K562 (cell line): ENCODE measurements at regions of chr1 and their contacts with region 1.

Region 1: GRCh38 chr1:16146279-16147155 is 9.4 kb downstream of the EPHA2 start:
- DNase-seq: peak; percentile 98
- ATAC-seq: peak; percentile 78
- H3K4me3 ChIP-seq: peak overlapping the region; percentile 23
- H3K27ac ChIP-seq: peak overlapping the region; percentile 93
- H3K4me1 ChIP-seq: peaks cover 62 to 73% of the 10 kb centered on the region in 2 experiments
- H3K27me3 ChIP-seq: no peaks in the 10 kb centered on the region
- CTCF ChIP-seq: no peak
- EP300 ChIP-seq: peak; percentile 96
- POLR2A ChIP-seq: peak; percentile 80
- RAD21 ChIP-seq: 0 out of 4 replicates have a peak, but pooled peaks of 1 of the 2 experiments have one; percentile 1

Region 2: GRCh38 chr1:14194511-14194910 is 1952.0 kb before region 1 on chr1:
- CTCF ChIA-PET with region 1: no interaction called
- POLR2A ChIA-PET with region 1: no interaction called
- in situ Hi-C with region 1: no loop called
- intact Hi-C with region 1: no loop called
- DNase-seq: no peak
- ATAC-seq: no peak
- H3K4me3 ChIP-seq: no peak overlapping the region
- H3K27ac ChIP-seq: no peak overlapping the region
- H3K4me1 ChIP-seq: no peaks in the 10 kb centered on the region
- H3K27me3 ChIP-seq: peaks cover 0 to 2% of the 10 kb centered on the region in 2 experiments; a peak in 2 of 5 replicates
- CTCF ChIP-seq: no peak
- EP300 ChIP-seq: no peak
- POLR2A ChIP-seq: no peak
- RAD21 ChIP-seq: no peak

Region 3: DNA sequence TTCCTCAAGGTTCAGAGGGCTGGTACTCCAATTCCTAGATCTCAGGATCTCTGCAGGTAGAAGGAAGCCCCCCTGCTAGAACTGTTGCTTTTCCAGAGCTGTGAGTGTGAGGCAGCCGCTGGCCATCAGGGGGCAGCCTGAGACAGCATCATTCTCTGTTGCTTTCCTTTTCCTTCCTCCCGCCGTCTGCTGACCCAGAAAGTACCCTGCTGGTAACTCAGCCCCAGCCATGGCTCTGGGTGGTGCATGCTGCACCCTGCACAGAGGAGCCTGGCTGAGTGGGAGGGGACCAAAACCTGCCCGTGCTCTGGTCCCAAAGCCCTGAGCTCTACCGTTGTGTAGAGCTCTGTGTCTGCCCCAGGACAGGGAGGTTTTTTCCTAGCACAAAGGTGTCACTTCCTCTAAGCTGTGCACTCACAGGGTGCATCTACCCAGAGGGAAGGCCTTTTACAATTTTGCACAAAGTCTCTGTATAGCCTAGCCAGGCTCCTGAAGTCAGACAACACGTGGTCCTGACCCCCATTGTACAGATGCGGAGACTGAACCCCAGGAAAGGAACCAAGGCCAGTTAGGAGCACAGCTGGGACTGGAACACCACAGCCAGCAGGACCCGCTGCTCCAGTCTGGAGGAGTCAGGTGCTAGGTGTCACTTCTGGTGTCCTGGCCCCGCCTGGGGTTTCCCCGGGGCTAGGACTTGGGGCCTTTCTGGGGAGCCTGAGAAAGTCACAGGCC is 67.4 kb before region 1 on chr1:
- CTCF ChIA-PET with region 1: interaction called, 3 read pairs
- POLR2A ChIA-PET with region 1: no interaction called
- in situ Hi-C with region 1: no loop called
- intact Hi-C with region 1: loop called (anchors 5 kb)
- DNase-seq: peak; percentile 71 to 87 (median 76)
- ATAC-seq: peak; percentile 84
- H3K4me3 ChIP-seq: no peak overlapping the region
- H3K27ac ChIP-seq: no peak overlapping the region
- H3K4me1 ChIP-seq: peaks cover 14 to 27% of the 10 kb centered on the region in 2 experiments; a peak in 4 of 5 replicates
- H3K27me3 ChIP-seq: peaks cover 0 to 3% of the 10 kb centered on the region in 2 experiments; a peak in 1 of 5 replicates
- CTCF ChIP-seq: peak; percentile 94 to 97 (median 97)
- EP300 ChIP-seq: no peak
- POLR2A ChIP-seq: no peak
- RAD21 ChIP-seq: peak; percentile 95 to 99

Region 4: GRCh38 chr1:16164213-16165072 is 17.9 kb after region 1 on chr1:
- CTCF ChIA-PET with region 1: no interaction called
- POLR2A ChIA-PET with region 1: interaction called, 38 read pairs
- in situ Hi-C with region 1: no loop called
- intact Hi-C with region 1: no loop called
- DNase-seq: peak; percentile 82 to 92 (median 88)
- ATAC-seq: peak; percentile 67
- H3K4me3 ChIP-seq: no peak overlapping the region
- H3K27ac ChIP-seq: peak overlapping the region; percentile 77
- H3K4me1 ChIP-seq: peaks cover 31 to 49% of the 10 kb centered on the region in 2 experiments
- H3K27me3 ChIP-seq: no peaks in the 10 kb centered on the region
- CTCF ChIP-seq: no peak
- EP300 ChIP-seq: peak; percentile 55; the same call in 1 of the 2 replicates
- POLR2A ChIP-seq: no peak
- RAD21 ChIP-seq: no peak

Region 5: GRCh38 chr1:16175610-16176553 is 29.4 kb after region 1 on chr1:
- CTCF ChIA-PET with region 1: no interaction called
- POLR2A ChIA-PET with region 1: interaction called, 3 read pairs
- in situ Hi-C with region 1: no loop called
- intact Hi-C with region 1: loop called (anchors 5 kb)
- DNase-seq: peak; percentile 61 to 69 (median 64)
- ATAC-seq: peak; percentile 64
- H3K4me3 ChIP-seq: no peak overlapping the region
- H3K27ac ChIP-seq: peak overlapping the region; percentile 58; the same call in 1 of the 3 replicates
- H3K4me1 ChIP-seq: peaks cover 37 to 55% of the 10 kb centered on the region in 2 experiments
- H3K27me3 ChIP-seq: no peaks in the 10 kb centered on the region
- CTCF ChIP-seq: no peak
- EP300 ChIP-seq: peak; percentile 24; the same call in 1 of the 2 replicates
- POLR2A ChIP-seq: no peak
- RAD21 ChIP-seq: no peak